ENCODE measurements at regions of chr5 and their contacts with region 1.

Region 1: DNA sequence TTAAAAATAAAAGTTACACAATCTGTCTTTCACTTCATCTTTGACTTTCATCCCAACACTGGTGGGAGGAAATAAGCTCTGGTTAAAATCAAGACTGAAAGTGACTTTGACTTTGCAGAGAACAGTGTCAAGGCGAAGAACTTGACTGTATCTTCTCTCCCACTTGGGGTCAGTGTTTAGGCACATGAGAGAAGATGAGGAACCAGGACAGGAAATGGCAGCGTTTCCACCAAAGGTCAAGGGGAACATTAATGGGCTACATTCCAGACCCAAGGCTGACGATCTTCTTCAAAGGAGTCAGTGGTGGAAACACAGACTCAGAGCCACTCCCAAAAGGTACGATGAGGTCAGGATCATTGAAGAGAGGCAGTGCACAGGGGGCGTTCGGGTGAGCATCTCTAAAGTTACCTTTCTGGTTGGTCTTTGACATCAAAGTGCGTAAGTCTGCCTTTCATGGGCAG is 409.6 kb downstream of the ARHGEF28 start:
- DNase-seq: peak; percentile 29
- H3K4me3 ChIP-seq: no peak overlapping the region
- H3K27ac ChIP-seq: no peak overlapping the region
- H3K4me1 ChIP-seq: no peaks in the 10 kb centered on the region
- H3K27me3 ChIP-seq: peaks cover 100% of the 10 kb centered on the region
- CTCF ChIP-seq: peak; percentile 37

Region 2: GRCh38 chr5:73617510-73618279 is 417.9 kb before region 1 on chr5:
- CTCF ChIA-PET with region 1: no interaction called
- POLR2A ChIA-PET with region 1: no interaction called
- intact Hi-C with region 1: no loop called
- DNase-seq: no peak
- H3K4me3 ChIP-seq: no peak overlapping the region
- H3K27ac ChIP-seq: no peak overlapping the region
- H3K4me1 ChIP-seq: no peaks in the 10 kb centered on the region
- H3K27me3 ChIP-seq: no peaks in the 10 kb centered on the region
- CTCF ChIP-seq: no peak

Region 3: GRCh38 chr5:73911761-73912393 is 123.7 kb before region 1 on chr5:
- CTCF ChIA-PET with region 1: no interaction called
- POLR2A ChIA-PET with region 1: no interaction called
- intact Hi-C with region 1: loop called (anchors 5 kb)
- DNase-seq: peak; percentile 87
- H3K4me3 ChIP-seq: no peak overlapping the region
- H3K27ac ChIP-seq: no peak overlapping the region
- H3K4me1 ChIP-seq: peaks cover 11% of the 10 kb centered on the region
- H3K27me3 ChIP-seq: peaks cover 83% of the 10 kb centered on the region
- CTCF ChIP-seq: no peak